ENCODE measurements at regions of chr7 and their contacts with region 1.

Region 1: GRCh38 chr7:129163875-129164544 is 19.5 kb downstream of the TSPAN33 start:
- DNase-seq: peak; percentile 36
- ATAC-seq: peak; percentile 64
- H3K4me3 ChIP-seq: no peak overlapping the region
- H3K27ac ChIP-seq: no peak overlapping the region
- H3K4me1 ChIP-seq: no peaks in the 10 kb centered on the region
- H3K27me3 ChIP-seq: no peaks in the 10 kb centered on the region
- CTCF ChIP-seq: peak; percentile 65 to 92 (median 75); a peak in 5 of 6 replicates
- POLR2A ChIP-seq: no peak
- RAD21 ChIP-seq: peak; percentile 61

Region 2: GRCh38 chr7:129091484-129092002 is 72.5 kb before region 1 on chr7:
- CTCF ChIA-PET with region 1: interaction called, 11 read pairs
- POLR2A ChIA-PET with region 1: no interaction called
- RAD21 ChIA-PET with region 1: interaction called in 1 of 2 experiments, 4 read pairs
- intact Hi-C with region 1: no loop called
- DNase-seq: peak; percentile 54
- ATAC-seq: peak; percentile 99
- H3K4me3 ChIP-seq: no peak overlapping the region
- H3K27ac ChIP-seq: no peak overlapping the region
- H3K4me1 ChIP-seq: peaks cover 0 to 6% of the 10 kb centered on the region in 2 experiments; a peak in 2 of 4 replicates
- H3K27me3 ChIP-seq: no peaks in the 10 kb centered on the region
- CTCF ChIP-seq: peak; percentile 97 to 99 (median 99)
- POLR2A ChIP-seq: no peak
- RAD21 ChIP-seq: peak; percentile 97

Region 3: DNA sequence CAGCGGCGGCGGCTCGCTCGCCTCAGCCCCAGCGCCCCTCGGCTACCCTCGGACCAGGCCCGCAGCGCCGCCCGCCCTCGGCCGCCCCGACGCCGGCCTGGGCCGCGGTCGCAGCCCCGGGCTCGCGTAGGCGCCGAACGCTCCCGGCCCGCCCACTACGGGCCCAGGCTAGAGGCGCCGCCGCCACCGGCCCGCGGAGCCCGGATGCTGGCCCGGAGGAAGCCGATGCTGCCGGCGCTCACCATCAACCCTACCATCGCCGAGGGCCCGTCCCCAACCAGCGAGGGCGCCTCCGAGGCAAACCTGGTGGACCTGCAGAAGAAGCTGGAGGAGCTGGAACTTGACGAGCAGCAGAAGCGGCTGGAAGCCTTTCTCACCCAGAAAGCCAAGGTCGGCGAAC is 37.7 kb before region 1 on chr7:
- CTCF ChIA-PET with region 1: interaction called, 10 read pairs
- POLR2A ChIA-PET with region 1: no interaction called
- RAD21 ChIA-PET with region 1: no interaction called
- intact Hi-C with region 1: no loop called
- DNase-seq: no peak
- ATAC-seq: no peak
- H3K4me3 ChIP-seq: no peak overlapping the region
- H3K27ac ChIP-seq: no peak overlapping the region
- H3K4me1 ChIP-seq: no peaks in the 10 kb centered on the region
- H3K27me3 ChIP-seq: no peaks in the 10 kb centered on the region
- CTCF ChIP-seq: no peak
- POLR2A ChIP-seq: no peak
- RAD21 ChIP-seq: no peak

Region 4: DNA sequence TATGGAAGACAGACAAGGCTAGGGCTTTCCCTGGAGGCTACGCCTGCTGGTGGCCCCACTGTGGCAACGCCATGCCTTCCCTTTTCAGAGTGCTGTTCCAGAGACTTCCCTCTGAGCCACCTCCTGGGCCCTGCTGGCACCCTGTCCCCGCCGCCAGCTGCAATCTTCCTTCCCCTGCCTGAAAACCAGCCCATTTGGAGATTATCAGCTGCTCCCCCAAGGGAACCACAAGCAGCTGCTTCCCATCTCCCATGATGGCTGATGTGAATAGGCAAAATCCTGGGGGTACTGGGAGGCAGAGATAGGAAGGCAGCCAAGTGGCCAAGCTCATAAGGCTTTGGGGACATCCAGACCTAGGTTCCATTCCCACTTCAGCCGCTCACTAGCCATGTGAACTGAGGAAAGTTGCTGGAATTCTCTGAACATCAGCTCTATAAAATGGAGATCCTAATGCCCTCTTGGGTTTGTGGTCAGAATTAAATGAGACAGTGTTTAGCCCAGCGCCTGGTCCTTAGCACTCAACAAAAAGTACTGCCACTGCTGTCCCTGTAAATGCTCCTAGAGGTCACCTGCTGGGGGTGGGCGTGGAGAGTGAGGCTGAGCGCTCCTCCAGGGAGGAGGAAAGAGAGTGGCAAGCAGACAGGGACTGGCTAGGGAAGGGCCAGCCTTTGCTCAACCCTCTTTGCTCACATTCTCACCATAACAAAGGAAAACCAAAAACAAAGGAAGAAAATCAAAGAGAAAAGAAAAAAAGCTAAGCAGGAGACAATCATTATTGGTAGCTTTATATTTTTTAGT is 13.6 kb before region 1 on chr7:
- CTCF ChIA-PET with region 1: interaction called, 21 read pairs
- POLR2A ChIA-PET with region 1: no interaction called
- RAD21 ChIA-PET with region 1: no interaction called
- intact Hi-C with region 1: no loop called
- DNase-seq: no peak
- ATAC-seq: no peak
- H3K4me3 ChIP-seq: no peak overlapping the region
- H3K27ac ChIP-seq: no peak overlapping the region
- H3K4me1 ChIP-seq: peaks cover 0 to 2% of the 10 kb centered on the region in 2 experiments; a peak in 1 of 4 replicates
- H3K27me3 ChIP-seq: no peaks in the 10 kb centered on the region
- CTCF ChIP-seq: no peak
- POLR2A ChIP-seq: no peak
- RAD21 ChIP-seq: no peak

Region 5: DNA sequence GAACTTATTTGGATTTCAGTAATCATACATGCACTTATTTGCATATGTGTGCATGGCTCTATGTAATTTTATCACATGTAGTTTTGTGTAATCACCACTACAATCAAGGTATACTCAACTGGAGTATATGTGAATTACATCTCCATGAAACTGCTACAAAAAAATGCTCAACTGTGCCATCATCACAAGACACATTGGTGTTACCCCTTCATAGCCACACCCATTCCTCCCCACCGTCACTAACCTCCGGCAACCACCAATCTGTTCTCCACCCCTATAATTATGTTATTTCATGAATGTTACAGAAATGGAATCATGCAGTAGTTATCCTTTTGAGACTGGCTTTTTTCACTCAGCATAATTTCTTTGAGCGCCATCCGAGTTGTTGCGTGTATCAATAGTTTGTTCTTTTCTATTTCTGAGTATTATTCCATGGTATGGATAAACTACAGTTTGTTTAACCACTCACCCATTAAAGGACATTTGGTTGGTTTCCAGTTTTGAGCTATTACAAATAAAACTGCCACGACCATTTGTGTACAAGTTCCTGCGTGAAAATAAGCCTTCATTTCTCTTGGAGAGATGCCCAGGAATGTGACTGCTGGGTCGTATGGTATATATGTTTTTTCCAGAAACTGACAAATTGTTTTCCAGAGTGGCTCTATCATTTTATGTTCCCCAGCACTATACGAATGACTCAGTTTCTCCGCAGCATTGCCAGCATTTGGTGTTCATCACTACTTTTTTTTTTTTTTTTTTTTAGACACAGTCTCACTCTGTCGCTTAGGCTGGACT is 13.1 kb after region 1 on chr7:
- CTCF ChIA-PET with region 1: interaction called, 15 read pairs
- POLR2A ChIA-PET with region 1: no interaction called
- RAD21 ChIA-PET with region 1: no interaction called
- intact Hi-C with region 1: no loop called
- DNase-seq: no peak
- ATAC-seq: no peak
- H3K4me3 ChIP-seq: no peak overlapping the region
- H3K27ac ChIP-seq: no peak overlapping the region
- H3K4me1 ChIP-seq: no peaks in the 10 kb centered on the region
- H3K27me3 ChIP-seq: no peaks in the 10 kb centered on the region
- CTCF ChIP-seq: no peak
- POLR2A ChIP-seq: no peak
- RAD21 ChIP-seq: no peak

Region 6: GRCh38 chr7:129210256-129210988 is 46.4 kb after region 1 on chr7:
- CTCF ChIA-PET with region 1: interaction called, 45 read pairs
- POLR2A ChIA-PET with region 1: no interaction called
- RAD21 ChIA-PET with region 1: interaction called, 3 to 8 read pairs
- intact Hi-C with region 1: loop called (anchors 2 kb)
- DNase-seq: no peak
- ATAC-seq: peak; percentile 91
- H3K4me3 ChIP-seq: no peak overlapping the region
- H3K27ac ChIP-seq: no peak overlapping the region
- H3K4me1 ChIP-seq: no peaks in the 10 kb centered on the region
- H3K27me3 ChIP-seq: no peaks in the 10 kb centered on the region
- CTCF ChIP-seq: peak; percentile 76 to 93 (median 87)
- POLR2A ChIP-seq: no peak
- RAD21 ChIP-seq: peak; percentile 90